HAP-1 (cell line): ENCODE measurements at regions of chr4 and their contacts with region 1.

Region 1: GRCh38 chr4:138035781-138036258 is 206.3 kb downstream of the SLC7A11 start:
- DNase-seq: peak; percentile 32 to 62
- H3K4me3 ChIP-seq: no peak overlapping the region
- H3K4me1 ChIP-seq: no peaks in the 10 kb centered on the region
- H3K27me3 ChIP-seq: no peaks in the 10 kb centered on the region

Region 2: DNA sequence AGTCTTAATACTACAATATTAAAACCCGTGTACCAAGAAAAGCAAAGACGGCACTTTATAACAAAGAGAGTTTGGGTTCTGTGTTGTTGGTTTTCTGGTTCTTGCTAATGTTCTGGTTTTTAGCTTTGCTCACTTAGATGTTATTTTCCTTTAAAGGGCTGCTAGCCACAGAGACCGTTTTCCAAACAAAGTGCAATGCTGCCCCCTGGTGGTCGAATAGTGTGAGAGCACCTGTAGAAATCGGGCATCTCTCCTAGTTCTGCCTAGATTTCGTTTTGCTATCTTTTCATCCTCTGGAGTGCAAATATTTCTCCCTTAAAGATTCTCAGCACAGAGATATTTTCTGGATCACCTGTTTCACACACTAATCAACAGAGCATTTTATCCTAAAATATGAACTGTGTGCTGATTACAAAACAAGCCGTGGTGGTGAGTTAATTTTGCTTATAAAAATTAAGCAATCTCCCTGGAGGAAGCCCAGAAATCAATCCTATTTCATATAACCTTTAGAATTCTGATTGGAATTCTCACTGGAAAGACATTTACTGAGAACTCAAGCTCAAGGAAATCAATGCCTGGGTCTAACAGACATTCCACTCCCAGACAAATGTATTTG is 645.3 kb after region 1 on chr4:
- in situ Hi-C with region 1: loop called (anchors 25 kb)
- DNase-seq: peak; percentile 68 to 86
- H3K4me3 ChIP-seq: no peak overlapping the region
- H3K4me1 ChIP-seq: no peaks in the 10 kb centered on the region
- H3K27me3 ChIP-seq: no peaks in the 10 kb centered on the region

Region 3: GRCh38 chr4:138870737-138871554 is 835.1 kb after region 1 on chr4:
- in situ Hi-C with region 1: loop called (anchors 25 kb)
- DNase-seq: peak; percentile 81
- H3K4me3 ChIP-seq: no peak overlapping the region
- H3K4me1 ChIP-seq: no peaks in the 10 kb centered on the region; the same call in 1 of the 2 replicates
- H3K27me3 ChIP-seq: no peaks in the 10 kb centered on the region

Region 4: DNA sequence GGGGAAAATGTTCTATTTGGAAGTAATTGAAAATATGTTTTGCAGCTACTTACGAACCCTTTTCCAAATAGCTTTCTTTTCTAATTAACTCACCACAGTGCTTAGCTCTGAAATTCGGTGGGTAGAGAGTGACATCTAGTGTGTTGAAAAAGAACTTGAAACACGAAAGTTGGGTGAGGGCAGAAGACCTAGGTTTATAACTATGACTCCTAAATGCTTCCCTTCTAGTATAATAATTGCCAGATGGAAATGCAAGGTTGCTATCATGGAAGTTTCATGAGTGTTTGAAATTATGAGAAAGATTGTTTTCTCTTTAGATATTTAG is 902.5 kb after region 1 on chr4:
- in situ Hi-C with region 1: loop called (anchors 25 kb)
- DNase-seq: peak; percentile 14 to 67
- H3K4me3 ChIP-seq: no peak overlapping the region
- H3K4me1 ChIP-seq: no peaks in the 10 kb centered on the region
- H3K27me3 ChIP-seq: no peaks in the 10 kb centered on the region